IMR-90 (cell line): ENCODE measurements at regions of chr16 and their contacts with region 1.

Region 1: DNA sequence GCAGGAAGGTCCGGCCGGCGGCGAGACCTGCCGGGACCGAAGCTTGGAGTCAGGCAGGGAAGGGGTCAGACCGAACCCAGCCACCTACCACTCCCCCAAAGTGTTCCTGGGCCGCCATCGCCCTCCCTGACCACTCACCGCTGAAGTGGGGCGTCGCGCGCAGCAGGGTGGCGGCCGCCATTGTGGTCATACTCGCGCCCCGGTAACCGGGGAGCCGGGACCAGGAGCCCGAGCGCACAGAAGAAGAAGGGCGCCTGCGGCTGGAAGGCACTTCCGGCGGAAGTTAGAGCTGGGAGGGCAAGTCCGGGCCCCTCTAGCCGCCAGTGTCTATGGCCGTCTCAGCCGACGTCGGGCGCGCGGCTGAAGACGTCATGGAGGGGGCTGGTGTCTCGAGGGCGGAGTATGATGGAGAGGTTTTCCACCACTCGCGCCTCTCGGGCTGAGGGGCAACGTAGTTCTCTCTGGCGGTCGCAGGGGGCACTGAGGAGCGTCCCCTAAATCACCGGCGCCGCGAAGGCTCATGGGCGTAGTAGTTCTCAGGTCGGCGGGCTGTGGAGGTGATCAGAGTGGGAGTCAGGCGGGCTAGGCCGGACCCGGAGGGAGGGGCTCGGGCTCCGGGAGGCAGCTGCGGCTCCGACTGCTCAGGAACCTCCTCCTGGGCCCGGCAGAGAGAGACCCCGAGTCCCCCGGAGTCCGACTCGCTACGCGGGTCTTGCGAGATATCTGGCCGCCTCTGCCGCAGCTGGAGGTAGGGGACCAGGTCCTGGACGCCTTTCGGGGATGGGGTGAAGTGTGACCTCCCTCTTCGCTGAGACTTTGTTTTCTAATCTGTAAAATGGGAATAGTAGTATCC is at the start of gene TUFM:
- DNase-seq: peak; percentile 98
- ATAC-seq: peak; percentile 96
- H3K4me3 ChIP-seq: peak within 1 kb of the TSS; percentile 81
- H3K27ac ChIP-seq: peak within 1 kb of the TSS; percentile 90
- H3K4me1 ChIP-seq: peaks cover 6% of the 10 kb centered on the region
- H3K27me3 ChIP-seq: no peaks in the 10 kb centered on the region
- CTCF ChIP-seq: peak; percentile 86
- POLR2A ChIP-seq: peak; percentile 61; the same call in 1 of the 2 replicates
- RAD21 ChIP-seq: peak; percentile 35
- total RNA-seq, gene TUFM: 80.3 and 88.0 TPM in 2 replicates

Region 2: DNA sequence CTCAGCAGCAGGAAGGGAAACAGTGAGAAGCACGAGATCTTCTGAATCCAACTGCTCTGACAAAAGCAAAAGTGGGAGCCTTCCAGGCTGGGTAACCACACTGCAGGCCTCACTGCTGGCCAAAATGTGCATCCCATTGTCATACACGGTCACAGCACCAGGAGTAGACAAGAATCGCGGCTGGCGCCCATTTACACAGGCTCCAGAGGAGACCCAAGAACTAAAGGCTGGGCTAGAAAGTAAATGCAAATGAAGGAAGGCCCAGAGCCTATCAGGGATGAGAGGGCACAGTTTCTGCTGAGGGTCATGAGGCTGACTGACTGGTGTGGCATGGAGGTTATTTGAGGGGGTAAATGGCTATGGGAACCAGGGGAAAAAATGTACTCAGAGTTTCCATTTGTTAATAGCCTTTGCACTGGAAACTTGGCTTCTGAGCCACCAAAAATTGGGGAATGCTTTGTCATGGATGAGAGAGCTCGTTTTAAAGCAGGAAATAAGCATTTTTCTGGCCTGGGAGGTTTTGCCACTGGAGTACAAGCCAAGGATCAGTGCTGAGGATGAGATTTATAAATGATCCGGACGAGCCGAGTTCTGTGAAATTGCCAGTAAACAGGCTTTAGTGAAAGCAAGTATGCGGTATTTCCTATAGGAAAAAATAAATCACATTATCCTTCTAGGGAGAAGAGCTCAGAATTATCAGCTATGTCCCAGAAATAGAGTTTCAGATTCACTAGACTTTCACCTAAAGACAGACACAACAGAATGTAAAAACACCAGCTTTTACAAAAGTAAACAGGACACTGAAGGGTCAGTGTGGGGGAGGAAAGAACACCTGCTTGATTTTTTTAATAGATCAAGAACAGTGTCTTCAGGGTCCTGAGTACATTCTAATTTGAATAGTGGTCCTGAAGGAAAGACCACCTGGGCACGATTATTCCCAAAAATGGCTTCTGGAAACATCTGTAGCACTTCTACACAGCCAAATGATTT is 715.9 kb before region 1 on chr16:
- CTCF ChIA-PET with region 1: no interaction called
- POLR2A ChIA-PET with region 1: no interaction called
- dilution Hi-C with region 1: no loop called
- in situ Hi-C with region 1: no loop called
- intact Hi-C with region 1: no loop called
- DNase-seq: no peak
- ATAC-seq: 0 out of 2 replicates have a peak, but pooled peaks have one; percentile 21
- H3K4me3 ChIP-seq: no peak overlapping the region
- H3K27ac ChIP-seq: no peak overlapping the region
- H3K4me1 ChIP-seq: no peaks in the 10 kb centered on the region
- H3K27me3 ChIP-seq: no peaks in the 10 kb centered on the region
- CTCF ChIP-seq: no peak
- POLR2A ChIP-seq: no peak
- RAD21 ChIP-seq: no peak

Region 3: GRCh38 chr16:28823872-28824716 is 22.2 kb before region 1 on chr16:
- CTCF ChIA-PET with region 1: no interaction called
- POLR2A ChIA-PET with region 1: interaction called, 15 read pairs
- dilution Hi-C with region 1: no loop called
- in situ Hi-C with region 1: no loop called
- intact Hi-C with region 1: no loop called
- DNase-seq: peak; percentile 98
- ATAC-seq: peak; percentile 90
- H3K4me3 ChIP-seq: peak overlapping the region; percentile 69
- H3K27ac ChIP-seq: peak overlapping the region; percentile 95
- H3K4me1 ChIP-seq: peaks cover 4% of the 10 kb centered on the region; the same call in 1 of the 2 replicates
- H3K27me3 ChIP-seq: no peaks in the 10 kb centered on the region
- CTCF ChIP-seq: peak; percentile 21; the same call in 1 of the 2 replicates
- POLR2A ChIP-seq: peak; percentile 82
- RAD21 ChIP-seq: no peak

Region 4: DNA sequence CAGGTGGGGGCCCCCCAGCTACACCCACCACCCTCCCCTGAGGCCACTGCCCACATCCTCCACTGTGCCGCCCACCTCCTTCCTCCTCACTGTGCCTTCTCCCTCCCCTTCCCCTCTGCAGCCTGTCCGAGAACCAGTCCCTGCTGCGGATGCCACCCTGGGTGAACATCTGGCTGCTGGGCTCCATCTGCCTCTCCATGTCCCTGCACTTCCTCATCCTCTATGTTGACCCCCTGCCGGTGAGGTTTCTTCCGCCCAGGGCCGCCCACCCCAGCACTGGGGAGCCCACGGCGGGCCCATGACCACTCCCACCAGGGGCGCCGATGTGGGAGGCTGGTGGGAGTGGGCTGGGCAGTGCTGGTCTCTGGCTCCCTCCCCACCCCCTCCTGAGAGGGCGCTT is 56.6 kb after region 1 on chr16:
- CTCF ChIA-PET with region 1: no interaction called
- POLR2A ChIA-PET with region 1: no interaction called
- dilution Hi-C with region 1: no loop called
- in situ Hi-C with region 1: no loop called
- intact Hi-C with region 1: no loop called
- DNase-seq: no peak
- ATAC-seq: no peak; the same call in 1 of the 2 replicates
- H3K4me3 ChIP-seq: no peak overlapping the region
- H3K27ac ChIP-seq: no peak overlapping the region
- H3K4me1 ChIP-seq: no peaks in the 10 kb centered on the region
- H3K27me3 ChIP-seq: no peaks in the 10 kb centered on the region
- CTCF ChIP-seq: no peak
- POLR2A ChIP-seq: no peak
- RAD21 ChIP-seq: no peak

Region 5: DNA sequence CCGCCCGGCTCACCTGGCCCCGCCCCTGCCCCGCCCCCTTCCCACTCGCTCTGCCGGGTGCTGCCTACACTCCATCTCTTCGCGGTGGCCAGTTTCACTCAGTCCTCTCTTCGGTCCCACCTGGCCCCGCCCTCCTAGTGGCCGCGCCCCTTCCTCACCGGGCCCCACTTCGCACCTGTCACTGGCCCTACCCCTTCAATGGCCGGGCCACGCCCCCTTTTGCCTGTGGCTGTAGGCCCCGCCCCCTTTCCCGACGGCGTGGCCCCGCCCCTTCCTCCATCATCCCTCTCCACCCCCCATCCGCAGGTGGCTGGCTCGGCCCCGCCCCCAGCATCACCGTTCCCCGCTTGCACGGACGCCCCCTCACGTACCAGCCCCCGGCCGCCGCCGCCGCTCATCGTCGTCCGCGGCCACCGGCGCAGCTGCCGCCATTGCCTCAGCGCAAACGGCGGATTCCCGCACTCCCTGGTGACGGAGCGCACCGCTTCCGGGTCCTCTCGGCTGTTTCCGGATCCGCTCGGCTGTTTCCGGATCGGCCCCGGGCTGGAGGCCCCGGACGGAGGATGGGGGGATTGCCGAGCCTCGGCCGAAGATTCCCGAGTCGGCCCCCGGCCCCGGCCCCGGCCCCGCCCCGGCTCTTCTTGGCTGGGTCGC is 78.6 kb after region 1 on chr16 and contains the start of gene RABEP2:
- CTCF ChIA-PET with region 1: no interaction called
- POLR2A ChIA-PET with region 1: no interaction called
- dilution Hi-C with region 1: no loop called
- in situ Hi-C with region 1: no loop called
- intact Hi-C with region 1: no loop called
- DNase-seq: peak; percentile 78
- ATAC-seq: peak; percentile 97
- H3K4me3 ChIP-seq: peak within 1 kb of the TSS; percentile 98
- H3K27ac ChIP-seq: peak within 1 kb of the TSS; percentile 96
- H3K4me1 ChIP-seq: peaks cover 2% of the 10 kb centered on the region; the same call in 1 of the 2 replicates
- H3K27me3 ChIP-seq: no peaks in the 10 kb centered on the region
- CTCF ChIP-seq: no peak
- POLR2A ChIP-seq: no peak
- RAD21 ChIP-seq: no peak
- total RNA-seq, gene RABEP2: 12.2 and 14.4 TPM in 2 replicates

Region 6: GRCh38 chr16:29007730-29008593 is 161.7 kb after region 1 on chr16:
- CTCF ChIA-PET with region 1: no interaction called
- POLR2A ChIA-PET with region 1: no interaction called
- dilution Hi-C with region 1: no loop called
- in situ Hi-C with region 1: no loop called
- intact Hi-C with region 1: no loop called
- DNase-seq: peak; percentile 90
- ATAC-seq: peak; percentile 79
- H3K4me3 ChIP-seq: no peak overlapping the region
- H3K27ac ChIP-seq: no peak overlapping the region
- H3K4me1 ChIP-seq: peaks cover 2% of the 10 kb centered on the region; the same call in 1 of the 2 replicates
- H3K27me3 ChIP-seq: no peaks in the 10 kb centered on the region; the same call in none of the 2 replicates
- CTCF ChIP-seq: no peak
- POLR2A ChIP-seq: no peak
- RAD21 ChIP-seq: no peak